Right ventricle myocardium inferior (tissue), 1 donor: ENCODE measurements at regions of chr4 and their contacts with region 1.

Region 1: DNA sequence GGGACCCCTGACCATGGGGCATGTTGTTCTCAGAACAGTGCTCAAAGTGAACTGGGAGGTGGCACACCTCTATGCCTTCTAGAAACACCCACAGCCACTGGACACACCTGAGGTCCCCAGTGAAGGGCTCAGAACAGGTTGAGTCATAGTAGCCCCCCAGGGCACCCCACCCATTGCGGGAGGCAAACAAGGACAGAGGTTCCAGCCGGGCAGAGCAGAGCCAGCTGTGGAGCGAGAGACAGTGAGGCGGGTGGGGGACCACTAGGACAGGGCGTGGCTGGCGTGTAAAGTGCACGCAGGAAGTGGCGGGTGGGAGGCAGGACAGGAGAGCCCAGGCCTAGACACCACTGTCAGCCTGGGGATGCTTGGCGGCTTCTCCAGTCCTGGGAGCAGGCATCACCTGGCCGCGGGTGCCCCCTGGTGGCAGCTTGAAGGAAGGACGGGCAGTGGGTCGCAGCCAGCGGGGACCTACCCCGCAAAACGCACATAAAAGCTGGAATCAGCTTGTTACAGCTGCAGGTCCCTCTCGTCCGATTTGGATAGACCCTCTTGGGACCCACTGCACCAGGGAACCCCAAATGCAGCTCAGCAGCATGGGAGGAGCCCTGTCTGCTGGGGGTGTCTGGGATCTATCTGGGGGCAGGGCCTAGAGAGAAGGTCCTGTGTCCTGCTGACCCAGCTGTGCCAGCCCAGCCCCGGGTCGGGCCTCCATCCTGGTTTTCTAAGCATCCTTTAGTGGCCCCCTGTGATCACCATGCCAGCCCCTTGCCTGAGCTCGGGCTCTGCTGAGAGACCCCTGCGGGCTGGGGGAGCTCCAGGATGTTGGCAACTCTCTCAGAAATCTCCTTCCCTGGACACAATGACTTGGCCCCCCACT is 57.6 kb downstream of the WFS1 start:
- DNase-seq: peak; percentile 91
- ATAC-seq: peak; percentile 82

Region 2: DNA sequence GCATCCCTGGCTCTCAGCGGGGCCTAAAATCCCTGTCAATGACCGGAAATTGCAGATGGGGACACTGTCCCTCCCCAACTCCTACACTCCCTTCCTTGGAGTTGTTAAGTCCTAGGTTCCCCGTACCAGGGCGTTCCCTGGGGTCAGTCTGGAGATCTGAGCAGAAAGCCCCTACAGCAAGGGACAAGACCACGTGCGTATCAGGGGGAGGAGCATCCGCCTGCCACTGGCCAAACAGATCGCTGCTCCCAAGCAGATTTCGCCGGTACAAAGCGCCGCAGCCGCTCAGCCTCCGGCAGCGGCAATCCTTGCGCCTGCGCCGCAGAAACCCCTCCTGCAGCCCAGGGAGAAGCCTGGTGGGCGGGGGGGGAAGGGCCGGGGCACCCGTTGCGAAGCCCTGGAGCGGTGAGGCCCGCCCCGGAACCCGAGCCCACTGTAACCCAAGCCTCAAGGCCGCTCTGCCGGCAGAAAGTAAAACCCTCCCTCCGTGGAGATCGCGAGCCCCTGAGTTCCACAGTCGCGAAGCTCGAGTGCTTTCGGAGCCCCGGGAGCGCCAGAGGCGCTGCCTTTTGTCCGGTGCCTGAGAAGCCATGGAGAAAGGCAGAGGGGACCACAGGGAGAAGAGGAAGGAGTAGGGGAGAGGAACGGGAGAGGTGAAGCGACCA is 437.1 kb before region 1 on chr4:
- intact Hi-C with region 1: no loop called
- DNase-seq: no peak
- ATAC-seq: no peak

Region 3: DNA sequence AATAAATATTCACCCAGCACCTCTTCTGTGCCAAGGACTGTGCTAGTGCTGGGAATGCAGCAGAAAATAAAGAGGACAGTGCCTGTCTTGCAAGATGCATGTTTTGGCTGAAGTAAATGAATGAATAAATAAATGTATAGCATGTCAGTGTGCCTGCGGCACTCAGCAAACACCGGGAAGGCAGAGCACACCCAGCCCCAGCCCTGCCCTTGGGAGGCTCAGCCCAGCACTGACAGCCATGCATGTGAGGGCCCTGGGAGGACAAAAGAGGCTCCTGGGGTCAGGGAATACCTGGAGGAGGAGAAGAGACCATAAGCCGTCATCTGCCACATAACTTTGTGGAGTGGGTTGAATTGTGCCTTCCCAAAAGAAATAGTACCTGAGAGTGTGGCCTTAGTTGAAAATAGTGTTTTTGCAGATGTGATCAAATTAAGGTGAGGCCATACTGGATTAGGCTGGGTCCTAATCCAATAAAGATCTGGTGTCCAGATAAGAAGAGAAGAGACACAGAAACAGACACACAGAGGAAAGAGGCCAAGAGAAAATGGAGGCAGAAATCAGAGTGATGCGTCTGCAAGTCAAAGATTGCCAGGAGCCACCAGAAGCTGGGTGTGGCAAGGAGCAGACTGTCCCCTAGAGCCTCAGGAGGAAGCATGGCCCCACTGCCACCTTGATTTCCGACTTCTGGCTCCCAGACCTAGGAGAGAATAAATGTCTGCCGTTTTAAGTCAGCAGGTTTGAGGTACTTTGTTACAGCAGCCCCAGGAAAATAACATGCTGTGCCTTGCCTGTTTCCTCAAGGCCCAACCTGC is 325.4 kb before region 1 on chr4:
- intact Hi-C with region 1: loop called (anchors 5 kb)
- DNase-seq: no peak
- ATAC-seq: no peak

Region 4: GRCh38 chr4:6250235-6250983 is 76.9 kb before region 1 on chr4:
- intact Hi-C with region 1: loop called (anchors 1 kb)
- DNase-seq: no peak
- ATAC-seq: no peak

Region 5: GRCh38 chr4:6264225-6264540 is 63.1 kb before region 1 on chr4:
- intact Hi-C with region 1: loop called (anchors 1 kb)
- DNase-seq: no peak
- ATAC-seq: peak; percentile 40

Region 6: DNA sequence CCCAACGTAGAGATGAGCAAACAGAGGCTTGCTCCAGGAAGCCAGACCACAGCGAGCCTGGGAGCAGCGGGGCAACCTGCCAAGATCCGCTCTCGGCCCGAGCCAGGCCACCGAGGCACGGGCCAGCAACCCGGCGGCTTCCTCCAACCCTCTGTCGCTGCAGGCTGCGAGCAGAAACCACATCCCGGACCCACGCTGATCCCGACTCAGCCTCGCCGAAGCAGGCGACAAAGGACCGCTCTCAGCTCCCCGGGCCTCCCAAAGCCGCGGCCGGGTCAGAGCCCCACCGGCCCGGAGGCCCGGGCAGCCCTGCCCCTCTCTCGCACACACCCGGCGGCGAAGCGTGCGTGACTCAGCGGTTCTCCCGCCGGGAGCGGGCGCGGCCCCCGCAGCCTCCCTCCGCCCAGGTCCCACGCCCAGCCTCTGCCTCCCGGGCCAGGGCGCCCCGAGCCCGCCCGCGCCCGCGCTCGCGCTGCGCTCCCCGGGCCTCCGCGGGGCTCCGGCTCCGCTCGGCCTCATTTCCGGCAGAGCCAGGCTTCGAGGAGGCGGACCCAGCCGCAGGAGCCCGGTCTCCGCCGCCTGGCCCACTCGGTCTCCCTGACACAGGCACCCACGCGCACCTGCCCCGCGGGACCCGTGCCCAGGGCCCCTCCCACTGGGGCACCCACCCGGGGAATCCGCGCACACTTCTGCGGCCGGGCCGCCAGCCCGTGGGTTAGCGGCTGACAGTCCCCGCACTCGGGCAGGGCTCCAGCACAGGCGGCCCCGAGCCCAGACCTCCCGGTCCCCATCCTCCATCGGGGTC is 143.4 kb after region 1 on chr4:
- intact Hi-C with region 1: loop called (anchors 5 kb)
- DNase-seq: peak; percentile 77
- ATAC-seq: peak; percentile 63

Region 7: DNA sequence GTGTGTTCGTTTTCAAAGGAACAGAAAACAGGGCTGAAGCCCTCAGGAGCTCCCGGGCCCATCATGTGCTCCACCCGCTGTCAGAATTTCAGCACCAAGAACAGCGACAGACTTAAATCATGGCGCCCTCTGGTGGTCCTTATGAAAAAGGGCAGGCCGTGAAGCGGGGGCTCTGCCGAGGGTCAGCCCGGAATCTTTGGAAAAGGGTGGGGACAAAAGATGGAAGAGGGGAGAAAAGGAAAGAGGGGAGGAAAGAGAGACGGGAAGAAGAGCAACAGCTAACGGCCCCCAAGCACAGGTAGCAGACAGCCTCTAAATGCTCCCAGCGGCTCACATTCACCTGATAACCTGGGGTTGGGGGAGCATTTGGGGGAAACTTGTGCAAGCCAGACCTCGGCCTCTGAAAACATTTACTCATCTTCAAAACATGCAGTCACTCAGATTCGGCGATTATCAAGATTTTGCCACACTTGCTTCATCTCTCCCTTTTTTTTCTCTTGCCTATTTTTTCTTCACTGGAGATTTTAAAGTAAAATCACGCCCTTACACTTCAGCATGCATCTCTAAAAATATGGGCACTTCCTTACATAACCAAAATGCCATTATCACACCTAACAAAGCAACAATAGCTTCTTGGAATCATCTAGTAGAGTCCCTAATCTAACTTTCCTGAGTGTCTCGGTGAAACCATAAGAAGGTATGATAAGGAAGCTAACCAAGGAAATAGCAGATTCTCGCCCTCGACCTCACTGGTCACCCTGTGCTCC is 219.6 kb after region 1 on chr4:
- intact Hi-C with region 1: loop called (anchors 2 kb)
- DNase-seq: peak; percentile 25
- ATAC-seq: no peak